AG04450 (cell line): ENCODE measurements at regions of chr3 and their contacts with region 1.

Region 1: GRCh38 chr3:186540221-186540834 is 3.9 kb downstream of the CRYGS start:
- DNase-seq: peak; percentile 29
- H3K4me3 ChIP-seq: no peak overlapping the region
- H3K27ac ChIP-seq: no peak overlapping the region
- H3K27me3 ChIP-seq: no peaks in the 10 kb centered on the region
- CTCF ChIP-seq: peak; percentile 69

Region 2: DNA sequence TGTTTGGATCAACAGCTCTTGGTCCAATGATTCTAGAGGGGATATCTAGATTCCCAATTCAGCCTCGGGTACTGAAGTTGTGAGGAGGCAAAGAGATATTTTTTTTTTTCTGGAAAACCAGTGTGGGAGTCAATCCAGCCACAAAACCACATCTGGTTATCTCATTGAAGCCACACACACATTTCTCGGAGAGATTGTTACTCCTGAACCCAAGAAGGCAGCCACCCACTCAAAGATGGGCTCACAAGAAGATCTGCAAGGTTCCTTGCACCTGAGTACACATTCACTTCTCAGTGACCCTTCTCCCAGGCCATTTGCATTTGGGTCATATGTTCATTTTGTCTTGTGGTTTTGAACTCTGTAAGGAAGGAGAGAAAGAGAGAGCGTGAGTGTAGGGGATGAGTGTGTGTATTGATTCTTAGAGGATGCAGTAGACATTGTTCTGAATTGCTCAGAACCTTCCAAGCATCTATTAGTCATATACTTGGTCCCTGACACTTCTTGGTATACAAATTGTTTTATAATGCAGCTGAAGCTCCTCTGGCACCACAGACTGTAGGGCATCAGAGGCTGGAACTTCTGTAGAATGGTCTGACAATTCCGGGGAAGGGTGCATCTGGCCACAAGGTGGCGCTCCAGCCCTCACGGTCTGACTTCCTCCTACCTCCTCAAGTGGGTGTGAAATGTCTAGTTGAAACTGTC is 563.2 kb before region 1 on chr3:
- CTCF ChIA-PET with region 1: interaction called, 61 read pairs
- POLR2A ChIA-PET with region 1: no interaction called
- DNase-seq: peak; percentile 34
- H3K4me3 ChIP-seq: no peak overlapping the region
- H3K27ac ChIP-seq: no peak overlapping the region
- H3K27me3 ChIP-seq: no peaks in the 10 kb centered on the region
- CTCF ChIP-seq: peak; percentile 95

Region 3: DNA sequence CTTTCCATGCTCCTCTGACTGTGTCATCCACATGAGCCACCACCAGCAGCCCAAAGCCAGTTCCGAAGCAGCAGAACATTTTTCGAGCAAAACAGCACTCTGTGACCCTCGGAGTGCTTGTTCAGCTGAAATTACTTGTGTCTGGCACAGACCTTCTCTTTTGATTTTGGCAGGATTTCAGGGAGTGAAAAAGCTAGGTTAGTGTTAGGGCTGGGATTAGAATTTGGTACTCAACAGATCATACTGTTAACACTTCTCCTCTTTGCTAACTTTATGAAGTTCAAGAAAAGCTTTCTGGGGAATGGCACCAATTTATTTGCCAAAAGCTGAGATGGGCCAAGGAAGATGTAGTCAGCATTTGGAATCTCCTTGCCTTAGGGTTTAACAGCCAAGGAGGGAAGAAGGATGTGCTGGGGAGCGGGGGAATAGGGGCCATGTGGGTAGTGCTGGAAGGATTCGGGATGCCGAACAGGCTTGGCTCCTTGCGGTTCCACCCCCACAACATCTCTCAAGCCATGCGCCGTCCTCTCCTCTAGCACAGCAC is 547.4 kb before region 1 on chr3:
- CTCF ChIA-PET with region 1: interaction called, 15 read pairs
- POLR2A ChIA-PET with region 1: no interaction called
- DNase-seq: peak; percentile 21
- H3K4me3 ChIP-seq: no peak overlapping the region
- H3K27ac ChIP-seq: no peak overlapping the region
- H3K27me3 ChIP-seq: peaks cover 3% of the 10 kb centered on the region
- CTCF ChIP-seq: no peak

Region 4: GRCh38 chr3:186109897-186110803 is 430.2 kb before region 1 on chr3:
- CTCF ChIA-PET with region 1: interaction called, 12 read pairs
- POLR2A ChIA-PET with region 1: no interaction called
- DNase-seq: no peak
- H3K4me3 ChIP-seq: peak overlapping the region; percentile 61
- H3K27ac ChIP-seq: peak overlapping the region; percentile 90
- H3K27me3 ChIP-seq: peaks cover 13% of the 10 kb centered on the region
- CTCF ChIP-seq: no peak

Region 5: DNA sequence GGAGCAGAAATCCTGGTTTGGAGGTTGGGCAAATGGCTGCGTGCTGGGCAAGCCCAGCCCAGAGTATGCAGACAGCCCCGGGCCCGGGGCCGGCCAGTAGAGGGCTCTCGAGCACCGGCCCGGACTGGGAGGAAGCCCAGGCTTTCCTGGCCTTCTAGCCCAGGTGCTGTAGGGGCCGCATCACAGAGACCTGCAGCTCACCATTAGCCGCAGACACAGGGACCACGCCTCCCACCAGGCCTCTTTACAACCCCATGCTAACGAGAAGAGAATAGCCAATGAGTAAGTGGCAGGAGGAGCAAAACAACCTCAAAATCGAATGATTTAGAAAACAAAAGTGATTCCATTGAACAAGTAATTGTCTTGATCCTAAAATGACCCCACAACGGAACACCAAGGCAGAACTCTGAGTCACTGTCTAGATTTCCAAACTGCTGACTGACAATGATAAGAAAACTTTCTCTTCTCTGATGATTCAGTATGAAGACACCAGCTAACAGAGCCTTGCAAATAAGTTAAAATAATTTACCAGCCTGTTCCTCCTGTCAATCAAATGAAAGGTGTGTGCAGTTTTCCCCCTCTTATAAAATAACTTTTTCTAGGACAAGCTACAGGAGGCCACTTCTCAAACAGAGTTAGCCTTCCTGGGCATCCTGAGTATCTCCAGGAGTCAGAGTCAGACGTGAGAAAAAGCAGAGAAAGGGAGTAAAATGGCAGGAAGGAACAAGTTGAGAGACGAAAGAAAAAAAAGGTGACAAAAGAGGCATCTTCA is 280.5 kb before region 1 on chr3:
- CTCF ChIA-PET with region 1: interaction called, 143 read pairs
- POLR2A ChIA-PET with region 1: interaction called, 3 read pairs
- DNase-seq: no peak
- H3K4me3 ChIP-seq: no peak overlapping the region; the same call in none of the 2 replicates
- H3K27ac ChIP-seq: no peak overlapping the region
- H3K27me3 ChIP-seq: peaks cover 11% of the 10 kb centered on the region
- CTCF ChIP-seq: peak; percentile 96

Region 6: GRCh38 chr3:186277268-186277909 is 262.9 kb before region 1 on chr3:
- CTCF ChIA-PET with region 1: interaction called, 36 read pairs
- POLR2A ChIA-PET with region 1: interaction called, 4 read pairs
- DNase-seq: peak; percentile 37
- H3K4me3 ChIP-seq: no peak overlapping the region
- H3K27ac ChIP-seq: no peak overlapping the region
- H3K27me3 ChIP-seq: peaks cover 2% of the 10 kb centered on the region
- CTCF ChIP-seq: peak; percentile 64